ENCODE measurements at regions of chr14 and their contacts with region 1.

Region 1: GRCh38 chr14:99604283-99604765 is 317 bp upstream of the CCDC85C start:
- DNase-seq: peak; percentile 94
- H3K4me3 ChIP-seq: peak overlapping the region; percentile 63 to 74
- H3K27ac ChIP-seq: peak overlapping the region; percentile 91 to 98
- H3K4me1 ChIP-seq: peaks cover 13% of the 10 kb centered on the region
- H3K27me3 ChIP-seq: no peaks in the 10 kb centered on the region
- CTCF ChIP-seq: peak in 1 of 4 experiments; percentile 2
- POLR2A ChIP-seq: peak; percentile 81

Region 2: GRCh38 chr14:99430465-99430864 is 173.9 kb before region 1 on chr14:
- intact Hi-C with region 1: no loop called
- DNase-seq: no peak
- H3K4me3 ChIP-seq: no peak overlapping the region
- H3K27ac ChIP-seq: no peak overlapping the region
- H3K4me1 ChIP-seq: no peaks in the 10 kb centered on the region
- H3K27me3 ChIP-seq: no peaks in the 10 kb centered on the region
- CTCF ChIP-seq: no peak
- POLR2A ChIP-seq: no peak

Region 3: GRCh38 chr14:99524804-99525698 is 79.3 kb before region 1 on chr14:
- intact Hi-C with region 1: loop called (anchors 2 kb)
- DNase-seq: peak; percentile 34
- H3K4me3 ChIP-seq: no peak overlapping the region
- H3K27ac ChIP-seq: peak overlapping the region; percentile 21 to 62
- H3K4me1 ChIP-seq: peaks cover 20% of the 10 kb centered on the region
- H3K27me3 ChIP-seq: no peaks in the 10 kb centered on the region
- CTCF ChIP-seq: peak in 1 of 4 experiments; percentile 38
- POLR2A ChIP-seq: no peak

Region 4: GRCh38 chr14:99563233-99564129 is 40.8 kb before region 1 on chr14:
- intact Hi-C with region 1: loop called (anchors 5 kb)
- DNase-seq: peak; percentile 79
- H3K4me3 ChIP-seq: no peak overlapping the region
- H3K27ac ChIP-seq: peak overlapping the region; percentile 60 to 84
- H3K4me1 ChIP-seq: peaks cover 62% of the 10 kb centered on the region
- H3K27me3 ChIP-seq: no peaks in the 10 kb centered on the region
- CTCF ChIP-seq: peak in 3 of 4 experiments; percentile 27 to 70 (median 54)
- POLR2A ChIP-seq: no peak

Region 5: GRCh38 chr14:99575043-99576023 is 29.0 kb before region 1 on chr14:
- intact Hi-C with region 1: loop called (anchors 2 kb)
- DNase-seq: peak; percentile 69
- H3K4me3 ChIP-seq: no peak overlapping the region
- H3K27ac ChIP-seq: peak overlapping the region; percentile 60 to 93
- H3K4me1 ChIP-seq: peaks cover 74% of the 10 kb centered on the region
- H3K27me3 ChIP-seq: no peaks in the 10 kb centered on the region
- CTCF ChIP-seq: peak in 1 of 4 experiments; percentile 20
- POLR2A ChIP-seq: no peak

Measured in prostate gland (tissue), 2 donors.